Mammary epithelial cell (primary cell): ENCODE measurements at regions of chr20 and their contacts with region 1.

Region 1: GRCh38 chr20:46427857-46428256 is 21.4 kb upstream of the ELMO2 start:
- DNase-seq: no peak
- H3K4me3 ChIP-seq: no peak overlapping the region
- H3K27ac ChIP-seq: no peak overlapping the region
- H3K4me1 ChIP-seq: no peaks in the 10 kb centered on the region
- H3K27me3 ChIP-seq: peaks cover 2% of the 10 kb centered on the region
- CTCF ChIP-seq: no peak

Region 2: GRCh38 chr20:46333161-46333991 is 94.5 kb before region 1 on chr20:
- CTCF ChIA-PET with region 1: no interaction called
- dilution Hi-C with region 1: no loop called
- in situ Hi-C with region 1: no loop called
- intact Hi-C with region 1: no loop called
- DNase-seq: peak; percentile 27
- H3K4me3 ChIP-seq: no peak overlapping the region
- H3K27ac ChIP-seq: no peak overlapping the region
- H3K4me1 ChIP-seq: peaks cover 18% of the 10 kb centered on the region
- H3K27me3 ChIP-seq: no peaks in the 10 kb centered on the region
- CTCF ChIP-seq: no peak

Region 3: DNA sequence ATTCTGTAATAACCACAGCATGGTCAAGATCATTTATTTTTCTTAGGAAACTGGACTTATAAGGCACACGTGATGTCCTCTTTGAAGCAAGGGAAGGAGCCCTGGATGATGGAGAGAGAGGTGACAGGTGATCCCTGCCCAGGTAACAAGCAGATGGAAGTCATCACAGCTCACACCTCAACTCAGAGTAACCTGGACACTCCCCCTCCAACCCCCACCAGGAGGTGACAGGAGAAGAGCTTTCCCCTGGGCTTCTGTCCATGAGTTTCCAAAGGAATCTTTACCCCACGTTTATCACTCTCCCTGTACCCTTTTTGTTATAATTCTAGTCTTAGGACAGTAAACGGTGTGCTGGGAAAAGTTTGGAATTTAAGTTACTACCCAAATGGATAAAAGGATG is 57.1 kb after region 1 on chr20:
- CTCF ChIA-PET with region 1: no interaction called
- dilution Hi-C with region 1: loop called (anchors 5 kb)
- in situ Hi-C with region 1: no loop called
- intact Hi-C with region 1: no loop called
- DNase-seq: no peak
- H3K4me3 ChIP-seq: no peak overlapping the region
- H3K27ac ChIP-seq: no peak overlapping the region
- H3K4me1 ChIP-seq: no peaks in the 10 kb centered on the region
- H3K27me3 ChIP-seq: no peaks in the 10 kb centered on the region
- CTCF ChIP-seq: no peak